Sigmoid colon (tissue), 7 donors: ENCODE measurements at regions of chr4 and their contacts with region 1.

Region 1: DNA sequence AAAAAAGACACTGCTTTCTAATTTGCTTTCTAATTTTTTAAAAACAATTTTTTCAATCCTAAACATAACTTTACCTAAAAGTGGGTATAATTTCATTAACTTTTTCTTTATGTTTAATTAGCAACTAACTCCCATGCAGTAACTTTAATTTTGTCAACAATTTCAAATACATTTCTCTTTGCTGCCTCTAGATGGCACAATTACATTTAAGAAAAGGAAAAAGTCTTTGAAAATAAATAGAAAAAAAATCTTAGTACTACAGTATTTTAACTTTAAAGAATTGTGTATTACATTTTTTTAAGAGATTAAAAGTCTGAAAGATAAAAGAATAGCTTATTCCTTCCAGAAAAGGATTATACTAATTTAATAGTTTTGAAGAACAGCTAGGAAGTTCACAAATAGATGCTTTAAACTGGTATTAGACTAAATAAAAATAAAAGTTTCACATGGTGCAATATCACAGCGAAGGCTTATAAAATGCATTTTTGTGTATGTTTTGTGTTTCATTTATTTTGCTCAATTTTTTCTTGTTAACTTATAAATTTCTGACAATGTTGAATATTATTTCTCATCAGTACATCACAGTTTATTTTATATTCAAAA is 105.1 kb downstream of the ADGRA3 start:
- DNase-seq: no peak
- H3K4me3 ChIP-seq: no peak overlapping the region
- H3K27ac ChIP-seq: no peak overlapping the region
- H3K4me1 ChIP-seq: no peaks in the 10 kb centered on the region
- H3K27me3 ChIP-seq: no peaks in the 10 kb centered on the region
- CTCF ChIP-seq: peak in 3 of 4 experiments; percentile 41 to 60 (median 43)
- EP300 ChIP-seq: no peak
- POLR2A ChIP-seq: no peak

Region 2: DNA sequence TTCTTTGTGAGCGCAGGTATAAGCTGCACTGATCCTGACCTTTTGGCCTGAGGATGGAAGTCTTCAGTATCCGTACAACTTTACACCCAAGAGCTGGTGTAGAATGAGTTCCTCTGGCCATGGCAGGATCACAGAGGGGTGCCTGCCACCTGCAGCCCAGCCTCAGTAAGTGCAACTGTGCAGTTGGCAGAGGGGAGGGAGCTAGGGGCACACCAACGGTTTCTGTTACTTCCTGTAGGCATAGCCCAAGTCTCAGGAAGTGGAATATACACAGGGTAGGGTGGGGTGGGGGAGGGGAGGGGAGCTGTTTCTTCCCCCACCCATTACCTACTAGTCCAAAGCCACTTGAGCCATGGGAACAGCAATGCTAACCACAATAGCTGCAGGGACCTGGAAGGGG is 196.6 kb after region 1 on chr4:
- intact Hi-C with region 1: loop called (anchors 2 kb)
- DNase-seq: peak; percentile 71
- H3K4me3 ChIP-seq: no peak overlapping the region
- H3K27ac ChIP-seq: no peak overlapping the region
- H3K4me1 ChIP-seq: no peaks in the 10 kb centered on the region
- H3K27me3 ChIP-seq: no peaks in the 10 kb centered on the region
- CTCF ChIP-seq: peak; percentile 33 to 71 (median 45)
- EP300 ChIP-seq: no peak
- POLR2A ChIP-seq: no peak

Region 3: DNA sequence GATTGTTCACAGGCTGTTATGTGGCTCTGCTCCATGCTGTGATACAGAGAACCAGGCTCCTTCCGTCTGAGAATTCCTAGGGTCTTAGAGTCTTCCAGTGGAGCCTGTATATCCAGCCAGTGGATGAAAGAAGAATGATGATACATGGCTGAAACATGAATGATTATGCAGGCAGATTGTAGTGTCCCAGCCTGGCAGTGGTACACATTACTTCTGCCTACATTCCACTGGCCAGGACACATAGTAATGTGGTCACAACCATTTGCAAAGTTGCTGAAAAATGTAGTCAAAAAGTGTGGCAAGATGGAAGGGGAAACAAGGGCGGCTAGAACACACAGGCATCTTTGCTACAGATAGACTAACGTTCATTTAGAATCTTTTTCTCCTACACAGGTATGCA is 277.5 kb after region 1 on chr4:
- intact Hi-C with region 1: loop called (anchors 2 kb)
- DNase-seq: no peak
- H3K4me3 ChIP-seq: no peak overlapping the region
- H3K27ac ChIP-seq: no peak overlapping the region
- H3K4me1 ChIP-seq: peaks cover 0 to 10% (median 2%) of the 10 kb centered on the region in 4 donors
- H3K27me3 ChIP-seq: no peaks in the 10 kb centered on the region
- CTCF ChIP-seq: no peak
- EP300 ChIP-seq: no peak
- POLR2A ChIP-seq: no peak